Activated CD4-positive, alpha-beta T cell treated with anti-CD3 and anti-CD28 coated beads for 36 hours (primary cell): ENCODE measurements at regions of chr13 and their contacts with region 1.

Region 1: DNA sequence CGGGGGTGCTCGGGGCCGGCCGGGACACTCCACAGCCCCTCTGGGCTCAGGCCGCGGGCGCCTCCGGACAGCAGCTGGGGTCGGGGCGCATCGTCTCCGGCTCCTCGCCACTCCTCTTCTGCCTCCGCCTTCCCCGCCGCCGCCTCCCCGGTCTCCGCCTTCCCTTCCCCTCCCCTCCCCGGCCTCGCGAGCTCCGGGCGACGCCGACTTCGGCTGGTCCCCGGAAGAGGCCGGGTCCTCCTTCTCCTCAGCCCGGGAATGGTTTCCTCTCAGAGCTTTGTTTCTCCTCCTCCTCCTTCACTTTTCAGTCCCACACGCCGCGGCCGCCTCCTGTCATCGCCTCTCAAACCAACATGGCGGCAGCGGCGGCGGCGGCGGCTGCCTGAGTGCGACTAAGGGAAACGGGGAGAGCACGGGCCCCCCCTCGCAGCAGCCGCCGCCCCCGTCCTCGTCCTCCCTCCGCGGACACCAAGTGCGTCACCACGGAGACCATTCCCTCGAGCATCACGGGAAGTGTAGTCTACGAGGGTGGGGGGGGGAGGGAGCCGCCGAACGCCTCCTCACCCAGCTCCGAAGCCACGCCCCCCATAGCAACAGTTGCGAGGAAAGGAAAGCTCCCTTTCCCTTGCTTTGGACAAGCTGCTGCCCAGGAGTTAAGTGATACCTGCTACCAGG is at the start of gene UBL3:
- DNase-seq: peak; percentile 98
- ATAC-seq: peak; percentile 86
- H3K4me3 Mint-ChIP-seq: peak within 1 kb of the TSS; percentile 90
- H3K27ac Mint-ChIP-seq: peak within 1 kb of the TSS; percentile 98
- H3K4me1 Mint-ChIP-seq: peaks cover 42% of the 10 kb centered on the region
- H3K27me3 Mint-ChIP-seq: no peaks in the 10 kb centered on the region
- total RNA-seq, gene UBL3: 9.1 to 10.7 TPM

Region 2: GRCh38 chr13:28658796-28659620 is 1191.4 kb before region 1 on chr13 and contains the start of gene POMP:
- CTCF ChIA-PET with region 1: no interaction called
- POLR2A ChIA-PET with region 1: no interaction called
- intact Hi-C with region 1: loop called in 1 of 2 experiments (anchors 1 kb)
- DNase-seq: peak; percentile 95
- ATAC-seq: peak; percentile 88
- H3K4me3 Mint-ChIP-seq: peak within 1 kb of the TSS; percentile 99
- H3K27ac Mint-ChIP-seq: peak within 1 kb of the TSS; percentile 98
- H3K4me1 Mint-ChIP-seq: peaks cover 59% of the 10 kb centered on the region
- H3K27me3 Mint-ChIP-seq: no peaks in the 10 kb centered on the region
- total RNA-seq, gene POMP: 107 to 132 TPM

Region 3: GRCh38 chr13:29771247-29771646 is 79.1 kb before region 1 on chr13:
- CTCF ChIA-PET with region 1: interaction called, 49 read pairs
- POLR2A ChIA-PET with region 1: no interaction called
- intact Hi-C with region 1: loop called (anchors 5 kb)
- DNase-seq: no peak
- ATAC-seq: no peak
- H3K4me3 Mint-ChIP-seq: no peak overlapping the region
- H3K27ac Mint-ChIP-seq: no peak overlapping the region
- H3K4me1 Mint-ChIP-seq: peaks cover 8% of the 10 kb centered on the region
- H3K27me3 Mint-ChIP-seq: no peaks in the 10 kb centered on the region

Region 4: GRCh38 chr13:29835280-29836061 is 14.9 kb before region 1 on chr13:
- CTCF ChIA-PET with region 1: interaction called, 14 read pairs
- POLR2A ChIA-PET with region 1: no interaction called
- intact Hi-C with region 1: loop called in 1 of 2 experiments (anchors 1 kb)
- DNase-seq: no peak
- ATAC-seq: no peak
- H3K4me3 Mint-ChIP-seq: no peak overlapping the region
- H3K27ac Mint-ChIP-seq: no peak overlapping the region
- H3K4me1 Mint-ChIP-seq: peaks cover 65% of the 10 kb centered on the region
- H3K27me3 Mint-ChIP-seq: no peaks in the 10 kb centered on the region

Region 5: DNA sequence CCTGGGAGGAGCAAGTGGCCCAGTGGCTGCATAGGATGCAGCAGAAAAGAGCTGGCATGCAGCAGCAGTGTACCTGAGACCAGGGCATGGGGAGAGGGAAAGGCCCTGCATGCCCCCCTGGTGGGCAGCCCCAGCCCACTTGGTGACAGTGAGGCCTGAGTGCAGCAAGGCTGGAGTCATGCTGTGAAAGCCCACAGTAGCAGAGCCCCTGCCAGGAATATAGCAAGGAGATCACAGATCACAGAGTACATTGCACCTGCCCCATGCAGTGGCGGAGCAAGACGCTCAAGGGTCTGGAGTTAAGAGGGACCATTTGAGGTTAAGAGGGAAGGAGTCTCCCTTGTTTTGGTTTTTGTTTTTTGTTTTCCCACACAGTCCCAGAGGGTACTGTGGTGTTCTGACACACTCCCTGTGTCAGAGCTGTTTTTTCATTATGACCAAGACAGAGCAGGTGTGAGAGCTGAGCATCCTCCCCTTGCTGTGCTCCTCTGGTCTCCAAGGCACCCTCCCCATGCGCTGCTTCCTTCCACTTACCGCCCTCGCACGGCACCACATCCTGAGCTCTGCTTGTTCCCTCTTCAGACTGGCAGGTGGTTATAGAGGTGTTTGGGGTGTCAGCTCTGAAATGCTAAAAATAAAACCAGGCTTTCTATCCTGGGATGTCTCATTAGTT is 85.1 kb after region 1 on chr13:
- CTCF ChIA-PET with region 1: interaction called, 3 read pairs
- POLR2A ChIA-PET with region 1: interaction called, 7 read pairs
- intact Hi-C with region 1: loop called (anchors 1 to 5 kb)
- DNase-seq: peak; percentile 93
- ATAC-seq: peak; percentile 95
- H3K4me3 Mint-ChIP-seq: peak overlapping the region; percentile 68
- H3K27ac Mint-ChIP-seq: peak overlapping the region; percentile 88
- H3K4me1 Mint-ChIP-seq: peaks cover 54% of the 10 kb centered on the region
- H3K27me3 Mint-ChIP-seq: no peaks in the 10 kb centered on the region

Region 6: DNA sequence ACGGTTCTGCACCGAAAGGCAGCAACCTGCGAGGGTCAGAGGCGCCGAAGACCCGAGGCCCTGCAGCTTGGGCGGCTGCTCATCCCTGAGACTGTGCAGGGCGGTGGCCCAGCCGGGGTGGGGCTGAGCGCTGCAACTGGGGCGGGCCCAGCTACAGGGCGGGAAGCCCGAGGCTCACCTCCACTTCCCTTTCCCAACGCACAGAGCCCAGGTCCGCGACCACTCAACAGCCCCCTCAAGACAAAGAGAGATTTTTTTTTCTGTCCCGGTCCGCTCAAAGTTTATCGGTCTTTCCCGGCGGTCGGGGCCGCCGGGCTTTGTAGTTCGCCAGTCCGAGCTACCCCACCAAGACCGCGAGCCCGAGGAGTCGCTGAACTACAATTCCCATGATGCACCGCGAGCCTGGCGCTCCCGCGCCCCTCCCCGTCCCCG is 456.4 kb after region 1 on chr13:
- CTCF ChIA-PET with region 1: no interaction called
- POLR2A ChIA-PET with region 1: no interaction called
- intact Hi-C with region 1: loop called in 1 of 2 experiments (anchors 2 kb)
- DNase-seq: peak; percentile 95
- ATAC-seq: peak; percentile 91
- H3K4me3 Mint-ChIP-seq: peak overlapping the region; percentile 80
- H3K27ac Mint-ChIP-seq: peak overlapping the region; percentile 79
- H3K4me1 Mint-ChIP-seq: peaks cover 31% of the 10 kb centered on the region
- H3K27me3 Mint-ChIP-seq: no peaks in the 10 kb centered on the region

Region 7: GRCh38 chr13:31161828-31162590 is 1311.6 kb after region 1 on chr13 and contains the start of gene HSPH1:
- CTCF ChIA-PET with region 1: no interaction called
- POLR2A ChIA-PET with region 1: no interaction called
- intact Hi-C with region 1: loop called in 1 of 2 experiments (anchors 10 kb)
- DNase-seq: peak; percentile 99
- ATAC-seq: peak; percentile 91
- H3K4me3 Mint-ChIP-seq: peak within 1 kb of the TSS; percentile 88
- H3K27ac Mint-ChIP-seq: peak within 1 kb of the TSS; percentile 100
- H3K4me1 Mint-ChIP-seq: peaks cover 31% of the 10 kb centered on the region
- H3K27me3 Mint-ChIP-seq: no peaks in the 10 kb centered on the region
- total RNA-seq, gene HSPH1: 229 to 259 TPM